Activated CD4-positive, alpha-beta memory T cell treated with anti-CD3 and anti-CD28 coated beads, Interleukin-2, amount 10 ng/mL, durations not matched to agents 7 days and 5 days (primary cell): ENCODE measurements at regions of chr17 and their contacts with region 1.

Region 1: DNA sequence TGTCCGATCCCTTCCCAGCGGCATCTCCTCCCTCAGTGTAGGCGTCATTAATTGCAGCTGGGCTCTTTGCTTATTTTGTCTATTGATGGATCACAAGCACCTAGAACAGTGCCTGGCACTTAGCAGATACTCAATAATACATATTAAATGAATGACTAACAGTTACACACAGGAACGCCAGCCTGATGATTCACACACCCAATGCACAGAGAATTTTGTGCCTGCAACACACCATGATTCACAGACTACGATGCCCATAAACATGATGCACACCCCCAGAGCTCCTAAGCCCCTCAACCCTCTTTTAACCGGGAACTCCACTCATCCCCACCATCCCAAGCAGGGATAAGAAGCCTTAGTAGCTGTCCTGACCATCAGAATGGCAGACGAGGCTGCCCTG is 66.6 kb upstream of the TMEM97 start:
- DNase-seq: no peak
- H3K4me3 Mint-ChIP-seq: no peak overlapping the region
- H3K27ac Mint-ChIP-seq: no peak overlapping the region
- H3K4me1 Mint-ChIP-seq: peaks cover 9% of the 10 kb centered on the region
- H3K27me3 Mint-ChIP-seq: peaks cover 2% of the 10 kb centered on the region

Region 2: DNA sequence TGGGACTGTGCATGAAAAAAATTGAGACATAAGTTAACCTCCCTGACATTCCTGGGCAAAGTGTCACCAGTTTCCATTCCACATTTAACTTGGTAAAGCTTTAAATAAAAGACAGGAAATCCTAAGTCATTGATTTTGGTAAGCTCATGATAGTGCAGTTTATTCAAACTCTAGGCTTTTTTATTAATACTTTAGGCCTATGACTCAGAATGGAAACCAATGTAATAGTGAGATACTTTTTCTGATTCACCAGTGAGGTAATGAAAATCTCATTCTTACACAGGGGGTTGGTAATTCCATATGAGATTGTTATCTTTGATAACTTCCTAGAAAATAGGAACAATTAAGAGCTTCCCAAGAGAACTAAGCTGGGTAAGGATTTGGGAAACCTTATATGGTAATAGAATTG is 118.9 kb before region 1 on chr17:
- CTCF ChIA-PET with region 1: no interaction called
- POLR2A ChIA-PET with region 1: no interaction called
- DNase-seq: no peak
- H3K4me3 Mint-ChIP-seq: no peak overlapping the region
- H3K27ac Mint-ChIP-seq: no peak overlapping the region
- H3K4me1 Mint-ChIP-seq: no peaks in the 10 kb centered on the region
- H3K27me3 Mint-ChIP-seq: no peaks in the 10 kb centered on the region

Region 3: GRCh38 chr17:28227316-28228125 is 24.9 kb before region 1 on chr17:
- CTCF ChIA-PET with region 1: interaction called, 11 read pairs
- POLR2A ChIA-PET with region 1: no interaction called
- DNase-seq: peak; percentile 27
- H3K4me3 Mint-ChIP-seq: peak overlapping the region; percentile 64
- H3K27ac Mint-ChIP-seq: no peak overlapping the region
- H3K4me1 Mint-ChIP-seq: peaks cover 28% of the 10 kb centered on the region
- H3K27me3 Mint-ChIP-seq: peaks cover 45% of the 10 kb centered on the region